AG04449 (cell line): ENCODE measurements at regions of chr6 and their contacts with region 1.

Region 1: GRCh38 chr6:42547407-42548329 is 16.2 kb upstream of the UBR2 start:
- DNase-seq: no peak
- H3K4me3 ChIP-seq: peak overlapping the region; percentile 55
- CTCF ChIP-seq: peak; percentile 100

Region 2: DNA sequence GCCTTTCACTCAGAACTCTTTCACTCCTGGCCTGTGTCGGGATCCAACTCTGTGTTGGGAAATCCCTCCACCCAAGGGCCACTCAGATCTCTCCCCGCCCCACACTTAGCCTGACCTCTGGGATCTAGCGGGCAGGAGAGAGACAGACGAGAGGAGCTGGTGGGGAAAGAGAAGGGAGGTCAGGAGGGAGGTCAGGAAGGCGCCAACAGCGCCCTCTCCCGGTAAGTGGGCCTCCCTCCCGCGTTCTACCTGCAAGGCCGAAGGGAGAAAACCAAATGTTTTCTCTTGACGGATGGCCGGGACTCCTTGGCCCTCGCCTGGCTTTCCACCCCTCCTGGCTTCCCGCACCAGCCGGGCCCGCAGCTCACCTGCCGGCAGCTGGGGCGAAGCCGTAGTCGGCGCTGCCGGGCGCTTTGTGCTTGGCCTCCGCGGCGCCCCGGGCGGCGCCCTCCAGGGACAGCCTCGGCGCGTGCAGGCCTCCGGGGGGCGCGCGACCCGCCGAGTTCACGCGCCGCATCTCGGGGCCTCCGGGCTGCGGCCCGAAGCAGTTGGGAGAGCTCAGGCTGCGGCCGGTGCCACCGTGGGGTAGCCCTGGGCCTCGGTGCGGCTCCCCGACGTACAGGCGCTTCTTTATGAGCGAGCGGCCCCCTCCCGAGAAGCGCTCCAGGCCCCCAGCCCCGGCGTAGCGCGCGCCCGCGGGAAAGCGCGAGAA is 443.4 kb before region 1 on chr6:
- CTCF ChIA-PET with region 1: interaction called, 10 read pairs
- POLR2A ChIA-PET with region 1: no interaction called
- DNase-seq: no peak
- H3K4me3 ChIP-seq: peak overlapping the region; percentile 33
- CTCF ChIP-seq: peak; percentile 79

Region 3: GRCh38 chr6:42230345-42231321 is 317.0 kb before region 1 on chr6:
- CTCF ChIA-PET with region 1: interaction called, 35 read pairs
- POLR2A ChIA-PET with region 1: no interaction called
- DNase-seq: no peak
- H3K4me3 ChIP-seq: no peak overlapping the region
- CTCF ChIP-seq: peak; percentile 27

Region 4: DNA sequence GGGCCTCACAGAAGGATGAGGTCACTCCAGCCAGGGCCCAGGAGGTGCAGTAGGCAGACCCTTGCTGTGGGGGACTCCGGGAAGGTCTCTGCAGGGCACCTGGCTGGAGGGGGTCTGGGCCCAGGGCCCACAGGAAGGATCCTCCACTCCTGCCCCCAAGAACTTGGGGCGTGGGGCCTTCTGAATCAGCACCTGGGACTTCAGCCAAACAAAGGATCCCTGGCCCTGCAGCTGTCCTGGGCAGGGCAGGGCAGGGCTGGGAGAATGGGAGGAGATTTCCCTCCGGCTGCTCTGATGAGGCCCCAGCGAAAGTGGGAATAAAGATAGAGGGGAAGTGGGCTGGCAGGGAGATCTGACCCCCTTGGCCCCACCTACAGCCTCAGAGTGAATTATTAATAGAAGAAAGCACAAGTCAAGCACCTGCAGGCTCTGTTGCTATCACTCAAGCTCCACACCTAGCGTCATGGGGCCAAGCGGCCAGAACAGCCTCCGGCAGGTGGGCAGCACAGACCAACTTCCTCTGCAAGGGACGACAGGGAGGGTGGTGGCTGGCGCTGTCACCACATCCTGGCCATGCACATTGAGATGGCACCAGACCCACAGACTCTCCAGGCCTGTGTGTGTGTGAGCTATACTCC is 268.4 kb before region 1 on chr6:
- CTCF ChIA-PET with region 1: interaction called, 23 read pairs
- POLR2A ChIA-PET with region 1: no interaction called
- DNase-seq: no peak
- H3K4me3 ChIP-seq: no peak overlapping the region
- CTCF ChIP-seq: no peak

Region 5: DNA sequence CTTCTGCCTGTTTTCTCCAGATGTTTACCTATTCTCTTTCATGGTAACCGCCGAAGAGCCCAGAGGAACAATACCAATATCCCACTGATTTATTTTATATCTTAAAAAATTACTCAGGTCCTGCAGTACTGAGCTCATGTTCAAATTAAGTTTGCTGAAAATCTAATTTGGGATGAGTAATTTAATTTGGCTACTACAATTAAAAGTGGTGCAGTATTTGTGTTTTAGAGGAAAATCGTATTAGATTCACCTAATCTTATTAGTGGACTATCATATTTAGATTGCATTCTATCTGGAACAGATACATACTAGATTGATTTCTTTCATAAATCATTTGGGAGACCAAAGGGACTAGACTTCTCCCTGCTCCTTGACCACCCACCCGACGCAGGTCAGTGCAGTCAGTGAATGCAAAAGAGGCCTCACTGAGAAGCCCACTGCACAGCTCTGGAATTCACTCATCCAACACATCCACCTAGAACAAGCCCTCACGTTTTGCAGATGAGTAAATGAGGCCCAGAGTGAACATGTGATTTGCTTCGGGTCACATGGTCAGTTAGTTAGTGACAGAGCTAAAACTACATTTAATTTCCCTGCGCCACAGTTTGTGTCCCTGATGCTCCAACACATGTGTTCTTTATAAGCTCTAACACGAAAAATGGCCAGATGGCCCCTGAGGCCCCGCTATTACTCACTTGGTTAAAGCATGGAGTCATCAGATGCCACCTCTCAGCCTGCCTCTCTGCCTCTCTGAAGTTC is 197.7 kb before region 1 on chr6:
- CTCF ChIA-PET with region 1: interaction called, 16 read pairs
- POLR2A ChIA-PET with region 1: no interaction called
- DNase-seq: no peak
- H3K4me3 ChIP-seq: no peak overlapping the region
- CTCF ChIP-seq: no peak

Region 6: DNA sequence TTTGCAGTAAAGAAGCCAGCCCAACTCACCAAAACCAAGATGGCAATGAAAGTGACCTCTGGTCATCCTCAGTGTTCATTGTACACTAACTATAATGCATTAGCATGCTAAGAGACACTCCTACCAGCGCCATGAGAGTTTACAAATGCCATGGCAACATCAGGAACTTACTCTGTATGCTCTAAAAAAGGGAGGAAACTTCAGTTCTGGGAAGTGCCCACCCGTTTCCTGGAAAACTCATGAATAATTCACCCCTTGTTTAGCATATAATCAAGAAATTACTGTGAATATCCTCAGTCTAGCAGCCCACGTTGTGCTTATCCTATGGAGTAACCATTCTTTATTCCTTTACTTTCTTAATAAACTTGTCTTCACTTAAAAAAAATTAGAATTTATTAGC is 76.5 kb before region 1 on chr6:
- CTCF ChIA-PET with region 1: interaction called, 10 read pairs
- POLR2A ChIA-PET with region 1: no interaction called
- DNase-seq: no peak
- H3K4me3 ChIP-seq: no peak overlapping the region
- CTCF ChIP-seq: no peak

Region 7: GRCh38 chr6:42563697-42564505 is 16.2 kb after region 1 on chr6 and contains the start of gene UBR2:
- CTCF ChIA-PET with region 1: interaction called, 171 read pairs
- POLR2A ChIA-PET with region 1: interaction called, 4 read pairs
- DNase-seq: peak; percentile 88
- H3K4me3 ChIP-seq: peak within 1 kb of the TSS; percentile 97
- CTCF ChIP-seq: peak; percentile 11

Region 8: GRCh38 chr6:42692137-42692911 is 144.7 kb after region 1 on chr6:
- CTCF ChIA-PET with region 1: no interaction called
- POLR2A ChIA-PET with region 1: no interaction called
- DNase-seq: no peak
- H3K4me3 ChIP-seq: no peak overlapping the region
- CTCF ChIP-seq: no peak

Region 9: DNA sequence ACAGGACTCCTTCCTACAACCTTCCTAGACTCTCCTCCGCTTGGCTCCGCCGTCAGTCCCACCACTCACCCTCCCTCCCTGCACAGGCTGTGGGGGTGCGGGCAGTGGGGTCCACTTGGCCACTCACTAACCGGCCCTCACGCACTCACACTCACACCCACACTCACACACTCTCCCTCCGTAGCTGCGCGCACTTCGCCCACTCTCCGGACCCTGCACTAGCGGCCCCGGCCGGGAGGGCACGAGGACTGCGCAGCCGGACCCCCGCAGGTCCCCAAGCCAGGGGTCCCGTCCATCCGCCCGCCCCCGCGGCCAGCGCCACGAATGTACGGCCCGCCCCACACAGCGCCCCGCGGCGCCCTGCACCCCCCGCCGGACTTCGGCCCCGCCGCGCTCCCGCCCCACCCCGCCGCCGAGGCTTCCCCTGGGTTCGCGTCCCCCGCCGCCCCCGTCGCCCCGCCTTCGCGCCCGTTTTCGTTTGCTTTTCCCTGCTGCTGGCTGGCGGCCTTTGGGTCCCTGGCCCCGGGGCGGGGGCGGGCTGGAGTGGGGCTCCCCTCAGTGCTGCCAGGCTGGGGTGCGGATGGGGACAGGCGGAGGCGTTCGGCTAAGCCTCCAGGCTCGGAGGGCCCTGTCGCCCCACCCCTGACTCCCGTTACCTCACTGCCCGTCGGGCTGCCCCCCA is 727.4 kb after region 1 on chr6:
- CTCF ChIA-PET with region 1: no interaction called
- POLR2A ChIA-PET with region 1: no interaction called
- DNase-seq: no peak
- H3K4me3 ChIP-seq: peak overlapping the region; percentile 48
- CTCF ChIP-seq: no peak